Activated T-helper 2 cell treated with anti-CD3 and anti-CD28 coated beads, Interferon-gamma antibody, Interleukin-2, Interleukin-4, amounts not matched to agents 10 μg/mL and 5 μg/mL and 100 μg/mL, durations not matched to agents 14 hours and 24 hours and 36 hours (primary cell): ENCODE measurements at regions of chr16 and their contacts with region 1.

Region 1: DNA sequence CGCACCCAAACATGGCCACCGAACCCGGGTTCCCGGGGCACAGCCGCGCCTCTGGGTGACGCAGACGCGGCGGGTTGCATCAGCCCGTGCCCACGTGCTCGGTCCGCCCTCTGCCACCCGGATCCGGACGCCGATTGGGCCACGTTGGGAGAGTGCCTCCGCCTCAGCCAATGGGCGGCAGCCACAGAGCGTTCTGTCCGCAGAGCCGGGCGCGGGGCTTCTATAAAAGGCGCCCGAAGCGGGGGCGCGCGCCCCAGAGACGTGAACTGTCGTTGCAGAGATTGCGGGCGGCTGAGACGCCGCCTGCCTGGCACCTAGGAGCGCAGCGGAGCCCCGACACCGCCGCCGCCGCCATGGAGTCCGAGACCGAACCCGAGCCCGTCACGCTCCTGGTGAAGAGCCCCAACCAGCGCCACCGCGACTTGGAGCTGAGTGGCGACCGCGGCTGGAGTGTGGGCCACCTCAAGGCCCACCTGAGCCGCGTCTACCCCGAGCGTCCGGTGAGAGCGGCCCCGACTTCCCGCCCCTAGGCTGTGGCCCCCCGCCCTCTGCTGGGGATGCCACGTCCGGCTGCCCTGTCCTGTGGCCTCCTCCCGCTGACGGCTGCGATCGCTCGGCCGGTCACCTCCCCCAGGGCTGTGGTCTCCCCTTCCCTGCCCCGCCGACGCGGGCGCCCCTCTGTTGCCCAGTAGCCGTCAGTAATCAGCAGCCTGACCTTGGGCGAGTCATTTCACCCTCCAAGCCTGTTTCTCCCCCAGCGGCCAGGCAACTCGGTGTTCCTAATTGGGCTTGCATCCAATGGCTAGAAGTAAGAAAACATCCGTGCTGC is at the start of gene HERPUD1:
- DNase-seq: peak; percentile 99
- H3K4me3 Mint-ChIP-seq: peak within 1 kb of the TSS; percentile 98
- H3K27ac Mint-ChIP-seq: peak within 1 kb of the TSS; percentile 97
- H3K4me1 Mint-ChIP-seq: peaks cover 35% of the 10 kb centered on the region
- H3K27me3 Mint-ChIP-seq: no peaks in the 10 kb centered on the region
- total RNA-seq, gene HERPUD1: 172 and 175 TPM in 2 replicates

Region 2: DNA sequence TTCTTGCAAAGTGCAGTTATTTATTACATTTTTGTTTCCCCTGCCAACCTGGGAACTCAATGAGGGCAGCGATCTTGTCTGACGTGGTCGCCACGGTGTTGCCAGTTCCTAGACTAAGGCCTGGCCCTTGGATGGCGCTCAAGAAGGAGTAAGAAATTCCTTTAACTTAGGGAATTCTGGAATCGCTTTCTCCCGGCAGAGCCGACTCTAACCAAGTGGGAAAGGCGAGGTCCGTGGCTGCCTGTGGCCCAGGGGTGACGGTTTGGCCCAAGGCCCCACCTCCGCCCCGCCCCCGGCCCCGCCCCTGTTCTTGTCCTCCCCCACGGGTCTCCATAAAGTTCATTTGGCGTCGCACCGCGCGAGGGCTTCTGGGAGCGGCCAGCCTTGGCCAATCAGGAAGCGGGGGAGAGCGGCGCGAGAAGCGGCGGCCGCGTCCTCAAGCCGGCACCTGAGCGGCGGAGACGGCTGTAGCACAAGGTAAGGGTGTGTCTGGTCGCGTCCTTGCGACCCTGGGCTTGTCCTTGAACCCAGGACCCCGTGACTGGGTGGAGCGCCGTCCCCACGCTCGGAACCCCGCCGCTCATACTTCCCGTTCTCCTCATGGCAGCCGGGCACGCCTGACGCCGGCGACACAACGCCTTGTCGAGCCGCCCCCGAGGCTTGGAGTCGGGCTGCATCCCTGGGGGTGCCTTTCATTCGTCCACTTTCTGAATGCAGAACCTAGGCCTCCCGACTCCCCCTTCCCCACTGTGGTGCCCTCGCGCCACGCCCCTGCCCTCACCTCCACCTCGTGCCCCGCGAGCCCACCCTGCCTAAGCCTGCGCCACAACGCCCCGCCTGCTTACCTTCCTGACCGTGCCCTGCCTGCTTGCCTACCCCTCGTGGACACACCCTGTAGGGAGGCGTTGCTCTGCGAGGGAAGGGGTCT is 202.1 kb before region 1 on chr16 and contains the start of gene NUP93:
- intact Hi-C with region 1: loop called (anchors 10 kb)
- DNase-seq: peak; percentile 88
- H3K4me3 Mint-ChIP-seq: no peak within 1 kb of the TSS
- H3K27ac Mint-ChIP-seq: peak within 1 kb of the TSS; percentile 83
- H3K4me1 Mint-ChIP-seq: peaks cover 17% of the 10 kb centered on the region
- H3K27me3 Mint-ChIP-seq: no peaks in the 10 kb centered on the region
- total RNA-seq, gene NUP93: 145 and 149 TPM in 2 replicates

Region 3: DNA sequence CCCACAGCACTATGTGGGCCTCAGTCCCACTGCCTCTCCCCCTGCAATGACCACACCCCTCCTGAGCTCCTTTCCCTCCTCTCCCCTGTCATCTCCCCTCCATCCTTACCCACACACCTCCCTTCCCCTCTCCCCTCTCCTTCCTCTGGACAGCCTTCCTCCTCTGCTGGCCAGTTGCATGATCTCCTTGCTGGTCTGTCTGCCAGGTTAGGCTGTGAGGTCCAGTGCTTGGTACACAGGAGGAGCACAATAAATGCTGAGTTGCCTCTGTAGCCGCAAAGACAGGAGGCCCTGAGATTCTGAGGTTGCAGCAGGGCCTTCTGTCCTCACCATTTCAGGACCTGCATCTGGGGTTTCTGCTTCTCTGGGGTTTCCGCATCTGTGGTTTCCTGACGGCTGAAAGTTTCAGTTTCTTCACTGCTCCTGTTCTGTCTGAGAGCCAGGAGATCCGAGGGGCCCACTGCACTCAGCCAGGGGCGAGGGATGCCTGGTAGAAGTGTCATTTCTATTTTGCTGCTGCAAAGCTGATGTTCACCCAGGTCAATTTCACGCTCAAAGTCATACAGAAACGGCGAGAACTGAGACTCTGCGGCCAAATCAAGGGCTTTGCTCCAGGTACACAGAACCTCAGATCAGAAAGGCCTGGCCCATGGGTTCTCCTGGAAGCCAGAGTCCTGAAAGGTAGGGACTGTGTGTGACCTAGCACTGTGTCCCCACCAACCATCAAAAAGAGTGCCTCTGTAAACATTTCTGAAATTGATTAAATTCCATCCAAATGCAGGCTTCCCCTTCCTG is 71.7 kb before region 1 on chr16:
- intact Hi-C with region 1: loop called (anchors 2 kb)
- DNase-seq: peak; percentile 51
- H3K4me3 Mint-ChIP-seq: peak overlapping the region; percentile 30
- H3K27ac Mint-ChIP-seq: peak overlapping the region; percentile 54
- H3K4me1 Mint-ChIP-seq: peaks cover 39% of the 10 kb centered on the region
- H3K27me3 Mint-ChIP-seq: no peaks in the 10 kb centered on the region

Region 4: GRCh38 chr16:57029161-57030160 is 97.4 kb after region 1 on chr16:
- intact Hi-C with region 1: no loop called
- DNase-seq: no peak
- H3K4me3 Mint-ChIP-seq: no peak overlapping the region
- H3K27ac Mint-ChIP-seq: no peak overlapping the region
- H3K4me1 Mint-ChIP-seq: peaks cover 27% of the 10 kb centered on the region
- H3K27me3 Mint-ChIP-seq: no peaks in the 10 kb centered on the region

Region 5: DNA sequence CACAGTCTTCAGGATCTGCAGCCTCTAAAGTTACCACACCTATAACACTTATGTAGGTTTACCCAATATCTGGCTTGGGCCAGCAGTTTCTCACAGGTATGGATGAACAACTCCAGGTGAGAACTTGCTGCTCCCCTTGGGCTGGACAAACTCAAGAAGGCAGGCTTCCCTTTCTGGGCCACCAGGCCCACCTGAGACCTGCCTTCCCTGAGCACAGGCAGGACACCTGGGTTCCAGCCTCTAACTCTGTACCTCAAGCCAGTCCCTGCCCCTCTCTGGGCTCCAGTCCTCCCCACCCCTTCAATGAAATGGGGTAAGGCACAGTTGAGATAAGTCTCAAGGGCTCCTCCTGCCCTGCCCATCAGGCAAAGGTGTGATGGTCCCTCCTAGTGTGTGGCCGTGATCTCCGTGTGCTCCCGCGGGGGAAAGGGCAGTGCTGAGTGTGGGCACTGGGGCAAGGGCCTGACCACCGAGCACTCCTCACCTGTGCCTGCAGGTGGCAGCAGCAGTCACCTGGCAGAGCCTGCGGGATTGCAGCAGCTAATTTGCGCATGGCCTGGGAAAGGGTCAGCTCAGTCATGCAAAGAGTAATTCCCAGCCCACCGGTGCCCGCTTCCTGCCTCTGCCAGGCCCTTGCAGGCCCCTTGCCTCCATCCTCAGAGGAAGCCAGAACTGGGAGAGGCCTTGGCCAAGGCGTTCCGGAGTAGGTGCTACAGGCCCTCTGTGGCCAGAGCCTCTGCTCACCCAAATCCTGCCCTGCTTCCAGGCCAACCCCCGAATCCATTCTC is 668.1 kb after region 1 on chr16:
- intact Hi-C with region 1: loop called (anchors 10 kb)
- DNase-seq: no peak
- H3K4me3 Mint-ChIP-seq: no peak overlapping the region
- H3K27ac Mint-ChIP-seq: no peak overlapping the region
- H3K4me1 Mint-ChIP-seq: peaks cover 49% of the 10 kb centered on the region
- H3K27me3 Mint-ChIP-seq: peaks cover 7% of the 10 kb centered on the region